Activated T-helper 2 cell treated with anti-CD3 and anti-CD28 coated beads, Interferon-gamma antibody, Interleukin-2, Interleukin-4, amounts not matched to agents 10 μg/mL and 5 μg/mL and 100 μg/mL, durations not matched to agents 14 hours and 24 hours and 36 hours (primary cell): ENCODE measurements at regions of chr10 and their contacts with region 1.

Region 1: GRCh38 chr10:45470098-45471012 is 96.3 kb downstream of the ALOX5 start:
- DNase-seq: peak; percentile 40
- H3K4me3 Mint-ChIP-seq: peak overlapping the region; percentile 35
- H3K27ac Mint-ChIP-seq: peak overlapping the region; percentile 84
- H3K4me1 Mint-ChIP-seq: peaks cover 32% of the 10 kb centered on the region
- H3K27me3 Mint-ChIP-seq: no peaks in the 10 kb centered on the region

Region 2: GRCh38 chr10:45453639-45454255 is 16.6 kb before region 1 on chr10:
- intact Hi-C with region 1: no loop called
- DNase-seq: no peak
- H3K4me3 Mint-ChIP-seq: no peak overlapping the region
- H3K27ac Mint-ChIP-seq: no peak overlapping the region
- H3K4me1 Mint-ChIP-seq: peaks cover 7% of the 10 kb centered on the region
- H3K27me3 Mint-ChIP-seq: no peaks in the 10 kb centered on the region

Region 3: GRCh38 chr10:45580371-45581215 is 110.2 kb after region 1 on chr10:
- intact Hi-C with region 1: loop called (anchors 2 kb)
- DNase-seq: no peak
- H3K4me3 Mint-ChIP-seq: peak overlapping the region; percentile 82
- H3K27ac Mint-ChIP-seq: peak overlapping the region; percentile 87
- H3K4me1 Mint-ChIP-seq: peaks cover 20% of the 10 kb centered on the region
- H3K27me3 Mint-ChIP-seq: peaks cover 5% of the 10 kb centered on the region